Mucosa of descending colon (tissue), 3 donors: ENCODE measurements at regions of chr20 and their contacts with region 1.

Region 1: DNA sequence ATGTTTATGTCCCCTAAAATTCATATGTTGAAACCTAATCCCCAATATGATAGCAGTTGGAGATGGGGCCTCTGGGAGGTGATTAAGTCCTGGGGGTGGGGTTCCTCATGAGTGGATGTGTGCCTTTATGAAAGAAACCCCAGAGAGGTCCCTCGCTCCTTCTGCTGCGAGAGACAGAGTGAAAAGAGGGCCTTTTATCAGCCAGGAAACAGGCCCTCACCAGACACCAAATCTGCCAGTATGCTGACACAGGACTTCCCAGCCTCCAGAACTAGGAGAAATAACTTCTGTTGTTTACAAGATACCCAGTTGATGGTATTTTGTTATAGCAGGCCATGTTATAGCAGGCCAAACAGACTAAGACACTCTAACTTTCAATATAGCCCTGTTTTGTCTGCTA is 100.9 kb upstream of the NFATC2 start:
- DNase-seq: no peak
- ATAC-seq: no peak
- H3K4me3 ChIP-seq: no peak overlapping the region
- H3K4me1 ChIP-seq: no peaks in the 10 kb centered on the region
- CTCF ChIP-seq: no peak

Region 2: DNA sequence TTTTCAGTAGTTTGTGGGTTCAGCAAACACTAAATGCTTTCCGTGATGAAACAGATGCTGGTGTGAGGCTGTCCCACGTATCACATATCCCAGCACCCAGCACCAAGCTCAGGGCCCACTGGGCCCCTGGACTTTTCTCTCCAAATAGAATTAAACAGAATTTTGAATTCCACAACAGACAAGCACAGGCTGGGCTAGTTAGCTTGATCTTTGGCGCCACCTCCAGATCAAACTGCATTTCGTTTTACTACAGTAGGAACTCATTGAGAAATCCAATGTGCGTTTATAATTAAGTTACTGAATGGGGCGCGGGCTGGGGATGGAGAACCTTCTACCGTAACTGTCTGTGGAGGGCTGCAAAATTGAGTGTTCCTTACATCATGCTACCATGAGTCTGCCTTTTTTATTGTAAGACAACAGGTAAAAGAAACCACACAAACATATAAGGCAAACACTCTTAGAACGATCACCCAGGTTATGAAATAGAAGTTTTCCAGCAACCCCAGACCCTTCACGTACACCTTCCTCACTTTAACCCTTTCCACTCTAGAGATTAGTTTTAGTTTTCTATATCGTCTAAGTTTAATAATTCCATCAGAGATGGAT is 440.3 kb after region 1 on chr20:
- intact Hi-C with region 1: loop called in 1 of 2 experiments (anchors 10 kb)
- DNase-seq: peak in 2 of 3 donors; percentile 32 to 77
- ATAC-seq: peak; percentile 52
- H3K4me3 ChIP-seq: no peak overlapping the region
- H3K4me1 ChIP-seq: no peaks in the 10 kb centered on the region
- CTCF ChIP-seq: no peak